PC-3 (cell line): ENCODE measurements at regions of chr1 and their contacts with region 1.

Region 1: DNA sequence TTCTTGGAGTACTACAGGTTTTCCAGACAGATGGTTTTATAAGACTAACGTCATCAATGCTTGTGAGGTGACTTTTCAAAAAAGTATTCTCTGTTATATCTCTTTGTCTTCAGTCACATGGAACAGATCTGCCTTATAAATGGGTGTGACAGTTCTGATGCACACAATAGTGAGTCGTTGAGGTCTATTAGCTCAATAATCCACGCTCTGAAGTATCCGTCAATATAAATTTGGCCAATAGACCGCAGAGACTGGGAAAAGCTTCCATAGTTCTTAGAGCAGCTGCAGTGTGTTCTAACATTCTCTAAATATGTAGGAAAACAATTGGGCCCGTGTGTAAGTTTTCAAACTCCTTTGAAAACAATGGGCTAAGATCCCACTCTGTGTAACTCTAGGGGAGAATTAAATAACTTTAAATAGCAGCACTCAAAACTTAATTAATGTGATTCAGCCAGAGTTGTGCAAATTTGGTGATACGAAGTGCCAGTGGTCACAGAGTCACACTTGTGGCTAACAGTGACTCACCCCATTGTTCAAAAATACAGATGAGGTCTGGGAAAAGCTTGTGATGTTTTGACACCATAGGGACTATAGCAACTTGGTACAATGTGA is 316.0 kb downstream of the LMO4 start:
- DNase-seq: peak; percentile 84
- ATAC-seq: peak; percentile 82
- H3K4me3 ChIP-seq: no peak overlapping the region
- H3K27ac ChIP-seq: peak overlapping the region; percentile 93
- H3K4me1 ChIP-seq: peaks cover 29% of the 10 kb centered on the region
- H3K27me3 ChIP-seq: no peaks in the 10 kb centered on the region
- CTCF ChIP-seq: no peak

Region 2: DNA sequence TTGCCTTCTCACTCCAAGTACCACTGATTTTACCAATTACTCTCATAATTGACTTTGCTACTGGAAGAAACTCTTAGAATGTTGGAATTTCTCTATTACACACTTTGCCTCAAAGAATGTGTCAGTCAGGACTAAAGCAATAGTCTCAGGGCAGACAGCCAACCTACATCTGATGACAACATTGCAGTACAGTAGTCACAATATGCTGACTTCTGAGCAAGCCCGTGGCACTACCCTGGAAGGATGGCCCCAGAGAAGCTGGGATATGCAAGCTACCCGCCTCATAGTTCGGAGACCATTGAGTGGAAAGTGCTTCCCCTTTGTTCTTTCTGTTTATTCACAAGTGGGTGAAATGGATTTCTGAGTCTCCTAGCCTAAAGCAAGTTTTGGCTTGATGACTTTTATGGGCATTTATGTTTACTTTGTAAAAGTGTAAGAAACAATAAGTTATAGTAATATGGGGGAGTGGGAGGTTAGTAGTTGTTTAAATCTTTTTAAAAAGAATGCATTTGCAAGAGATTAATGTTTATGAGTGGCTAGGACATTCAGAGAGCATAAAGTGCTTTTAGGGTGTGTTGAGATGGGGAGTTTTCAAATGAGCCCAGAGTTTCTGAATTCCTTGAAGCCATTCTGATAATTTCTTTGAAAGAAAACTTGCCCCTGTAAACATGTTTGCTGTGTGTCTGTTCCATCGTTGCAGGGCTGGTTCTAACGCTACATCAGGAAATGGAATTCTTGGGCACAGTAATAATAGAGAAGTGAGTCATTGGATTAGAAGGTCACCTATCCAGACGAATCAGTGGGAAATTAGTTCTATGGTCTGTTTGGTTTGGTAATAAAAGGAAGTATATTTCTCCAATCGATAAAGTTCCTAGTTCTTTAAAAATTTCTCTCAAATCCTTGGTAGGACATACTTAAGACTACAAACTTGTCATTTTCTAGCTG is 252.2 kb before region 1 on chr1:
- CTCF ChIA-PET with region 1: no interaction called
- POLR2A ChIA-PET with region 1: no interaction called
- intact Hi-C with region 1: loop called (anchors 10 kb)
- DNase-seq: peak; percentile 89
- ATAC-seq: peak; percentile 92
- H3K4me3 ChIP-seq: peak overlapping the region; percentile 42
- H3K27ac ChIP-seq: peak overlapping the region; percentile 82
- H3K4me1 ChIP-seq: peaks cover 21% of the 10 kb centered on the region
- H3K27me3 ChIP-seq: no peaks in the 10 kb centered on the region
- CTCF ChIP-seq: no peak; the same call in 1 of the 2 replicates

Region 3: GRCh38 chr1:87508247-87508787 is 136.4 kb before region 1 on chr1:
- CTCF ChIA-PET with region 1: no interaction called
- POLR2A ChIA-PET with region 1: no interaction called
- intact Hi-C with region 1: loop called (anchors 5 kb)
- DNase-seq: no peak
- ATAC-seq: peak; percentile 57
- H3K4me3 ChIP-seq: no peak overlapping the region
- H3K27ac ChIP-seq: no peak overlapping the region
- H3K4me1 ChIP-seq: no peaks in the 10 kb centered on the region; the same call in 1 of the 2 replicates
- H3K27me3 ChIP-seq: no peaks in the 10 kb centered on the region
- CTCF ChIP-seq: no peak